ENCODE measurements at regions of chr17 and their contacts with region 1.

Region 1: GRCh38 chr17:6666077-6666521 is 14.5 kb downstream of the C17orf100 start:
- DNase-seq: peak; percentile 82
- H3K4me3 ChIP-seq: no peak overlapping the region
- H3K27ac ChIP-seq: no peak overlapping the region
- H3K4me1 ChIP-seq: no peaks in the 10 kb centered on the region
- H3K27me3 ChIP-seq: peaks cover 37% of the 10 kb centered on the region
- CTCF ChIP-seq: peak; percentile 92

Region 2: GRCh38 chr17:6831661-6832263 is 165.7 kb after region 1 on chr17 and contains the start of gene TEKT1:
- CTCF ChIA-PET with region 1: no interaction called
- POLR2A ChIA-PET with region 1: no interaction called
- intact Hi-C with region 1: loop called (anchors 10 kb)
- DNase-seq: peak; percentile 60
- H3K4me3 ChIP-seq: no peak within 1 kb of the TSS
- H3K27ac ChIP-seq: no peak within 1 kb of the TSS
- H3K4me1 ChIP-seq: no peaks in the 10 kb centered on the region
- H3K27me3 ChIP-seq: peaks cover 93% of the 10 kb centered on the region
- CTCF ChIP-seq: no peak
- total RNA-seq, gene TEKT1: not detected in 2 replicates

Region 3: DNA sequence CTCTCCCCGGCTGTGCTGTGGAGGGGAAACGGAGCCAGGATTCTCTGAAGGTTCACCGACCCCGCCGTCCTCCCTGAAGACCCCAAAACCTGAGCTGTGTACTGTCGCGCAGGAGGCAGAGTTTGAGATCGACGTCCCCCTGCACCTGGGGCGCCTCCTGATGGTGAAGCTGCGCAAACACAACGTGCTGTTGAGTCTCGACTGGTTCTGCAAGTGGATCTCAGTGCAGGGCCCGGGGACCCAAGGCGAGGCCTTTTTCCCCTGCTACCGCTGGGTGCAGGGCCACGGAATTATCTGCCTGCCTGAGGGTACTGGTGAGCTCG is 228.1 kb after region 1 on chr17:
- CTCF ChIA-PET with region 1: no interaction called
- POLR2A ChIA-PET with region 1: no interaction called
- intact Hi-C with region 1: loop called (anchors 10 kb)
- DNase-seq: peak; percentile 53
- H3K4me3 ChIP-seq: peak overlapping the region; percentile 11
- H3K27ac ChIP-seq: no peak overlapping the region
- H3K4me1 ChIP-seq: peaks cover 4% of the 10 kb centered on the region
- H3K27me3 ChIP-seq: peaks cover 32% of the 10 kb centered on the region
- CTCF ChIP-seq: peak; percentile 77

Region 4: GRCh38 chr17:7023576-7024401 is 357.7 kb after region 1 on chr17:
- CTCF ChIA-PET with region 1: no interaction called
- POLR2A ChIA-PET with region 1: no interaction called
- intact Hi-C with region 1: no loop called
- DNase-seq: peak; percentile 97
- H3K4me3 ChIP-seq: peak overlapping the region; percentile 18
- H3K27ac ChIP-seq: peak overlapping the region; percentile 35
- H3K4me1 ChIP-seq: peaks cover 4% of the 10 kb centered on the region
- H3K27me3 ChIP-seq: no peaks in the 10 kb centered on the region
- CTCF ChIP-seq: no peak